ENCODE measurements at regions of chr5 and their contacts with region 1.

Region 1: GRCh38 chr5:150700594-150701293 is at the start of gene RBM22:
- DNase-seq: peak; percentile 89
- H3K4me3 Mint-ChIP-seq: no peak within 1 kb of the TSS
- H3K27ac Mint-ChIP-seq: no peak within 1 kb of the TSS
- H3K4me1 Mint-ChIP-seq: peaks cover 5% of the 10 kb centered on the region
- H3K27me3 Mint-ChIP-seq: no peaks in the 10 kb centered on the region
- total RNA-seq, gene RBM22: 77.5 and 81.9 TPM in 2 replicates

Region 2: GRCh38 chr5:150409638-150410523 is 290.9 kb before region 1 on chr5:
- intact Hi-C with region 1: loop called (anchors 2 kb)
- DNase-seq: peak; percentile 38
- H3K4me3 Mint-ChIP-seq: peak overlapping the region; percentile 91
- H3K27ac Mint-ChIP-seq: peak overlapping the region; percentile 98
- H3K4me1 Mint-ChIP-seq: peaks cover 45% of the 10 kb centered on the region
- H3K27me3 Mint-ChIP-seq: no peaks in the 10 kb centered on the region

Region 3: DNA sequence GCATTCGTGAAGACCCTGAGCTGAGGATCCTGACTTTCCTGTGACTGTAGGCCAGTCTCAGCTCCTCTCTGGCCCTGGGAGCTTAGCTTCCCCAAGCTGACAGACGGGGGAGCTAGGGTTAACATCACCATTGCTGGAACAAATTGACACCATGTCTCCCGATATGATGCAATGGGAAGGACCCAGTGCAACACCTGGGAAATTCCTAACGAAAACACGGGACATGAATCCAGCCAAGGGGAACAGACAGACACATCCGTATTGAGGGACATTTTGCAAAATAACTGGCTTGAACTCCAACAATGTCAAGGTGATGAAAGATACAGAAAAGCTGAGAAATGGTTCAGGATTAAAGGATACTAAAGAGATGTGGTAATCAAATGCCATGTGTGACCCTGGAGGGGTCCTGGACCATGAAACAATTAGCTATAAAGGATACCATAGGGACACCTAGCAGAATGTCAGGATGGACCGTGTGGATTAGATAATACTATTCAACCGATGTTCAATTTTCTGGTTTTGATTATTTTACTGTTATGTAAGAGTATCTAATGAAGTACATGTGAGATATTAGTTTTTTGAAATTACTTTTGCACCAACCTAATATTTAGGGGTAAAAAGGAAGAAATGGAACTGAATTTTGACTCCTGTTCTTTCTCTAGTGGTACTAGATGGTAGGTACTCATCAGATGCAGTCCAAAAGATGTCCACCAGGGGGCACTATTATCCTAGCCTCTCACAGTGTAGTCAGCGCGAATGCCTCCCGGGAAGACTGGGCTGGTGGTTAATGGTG is 140.1 kb before region 1 on chr5:
- intact Hi-C with region 1: loop called (anchors 2 kb)
- DNase-seq: peak; percentile 71
- H3K4me3 Mint-ChIP-seq: no peak overlapping the region
- H3K27ac Mint-ChIP-seq: no peak overlapping the region
- H3K4me1 Mint-ChIP-seq: no peaks in the 10 kb centered on the region
- H3K27me3 Mint-ChIP-seq: peaks cover 7% of the 10 kb centered on the region

Region 4: DNA sequence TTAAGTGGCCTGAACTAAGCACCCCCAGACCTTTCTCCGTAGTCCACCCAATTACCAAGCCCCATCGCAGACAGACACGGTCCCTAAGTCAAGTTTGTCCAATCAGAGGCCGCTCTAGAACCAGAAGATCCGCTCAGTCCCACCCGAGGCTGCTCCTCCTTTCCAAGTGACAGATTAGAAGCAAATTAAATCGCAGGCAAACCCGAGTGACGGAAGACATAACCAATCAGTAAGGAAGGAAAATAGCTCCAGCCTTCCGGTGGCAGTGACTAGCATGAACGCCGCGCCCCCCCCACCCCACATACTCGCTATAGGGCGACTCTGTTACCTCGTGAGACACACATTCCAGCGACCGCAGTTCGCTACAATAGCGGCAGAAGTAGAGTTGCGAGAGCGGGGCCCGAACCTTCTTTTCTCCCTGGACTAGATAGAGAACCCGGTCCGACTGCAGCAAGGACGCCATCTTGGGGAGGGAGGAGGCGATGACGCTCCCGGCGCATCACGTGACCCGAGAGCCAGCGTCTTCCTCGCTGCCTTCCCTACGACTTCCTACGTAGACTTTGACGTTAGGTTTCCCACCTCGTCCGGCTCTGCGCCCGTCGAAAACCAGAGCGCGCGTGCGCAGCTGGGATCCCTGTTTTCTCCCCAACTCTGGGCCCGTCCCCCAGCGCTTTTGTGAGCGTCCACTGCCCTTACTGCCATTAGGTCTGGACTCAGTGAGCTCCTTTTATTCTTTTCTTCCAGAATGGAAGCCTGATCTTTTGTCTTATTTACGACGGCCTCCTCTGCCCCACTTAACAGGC is 58.0 kb after region 1 on chr5 and contains the start of gene DCTN4:
- intact Hi-C with region 1: loop called (anchors 1 kb)
- DNase-seq: peak; percentile 90
- H3K4me3 Mint-ChIP-seq: no peak within 1 kb of the TSS
- H3K27ac Mint-ChIP-seq: no peak within 1 kb of the TSS
- H3K4me1 Mint-ChIP-seq: peaks cover 34% of the 10 kb centered on the region
- H3K27me3 Mint-ChIP-seq: peaks cover 2% of the 10 kb centered on the region
- total RNA-seq, gene DCTN4: 42.3 and 46.4 TPM in 2 replicates

Region 5: DNA sequence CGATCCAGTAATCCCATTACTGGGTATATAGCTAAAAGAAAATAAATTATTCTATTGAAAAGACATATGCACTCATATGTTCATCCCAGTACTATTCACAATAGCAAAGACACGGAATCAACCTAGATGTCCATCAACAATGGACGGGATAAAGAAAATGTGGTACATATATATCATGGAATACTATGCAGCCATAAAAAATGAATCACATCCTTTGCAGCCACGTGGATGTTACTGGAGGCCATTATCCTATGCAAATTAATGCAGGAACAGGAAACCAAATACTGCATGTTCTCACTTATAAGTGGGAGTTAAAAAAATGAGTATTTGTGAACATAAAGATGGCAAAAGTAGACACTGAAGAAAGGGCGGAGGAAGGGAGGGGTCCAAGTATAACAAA is 129.0 kb after region 1 on chr5:
- intact Hi-C with region 1: no loop called
- DNase-seq: no peak
- H3K4me3 Mint-ChIP-seq: no peak overlapping the region
- H3K27ac Mint-ChIP-seq: no peak overlapping the region
- H3K4me1 Mint-ChIP-seq: no peaks in the 10 kb centered on the region
- H3K27me3 Mint-ChIP-seq: peaks cover 6% of the 10 kb centered on the region

Region 6: DNA sequence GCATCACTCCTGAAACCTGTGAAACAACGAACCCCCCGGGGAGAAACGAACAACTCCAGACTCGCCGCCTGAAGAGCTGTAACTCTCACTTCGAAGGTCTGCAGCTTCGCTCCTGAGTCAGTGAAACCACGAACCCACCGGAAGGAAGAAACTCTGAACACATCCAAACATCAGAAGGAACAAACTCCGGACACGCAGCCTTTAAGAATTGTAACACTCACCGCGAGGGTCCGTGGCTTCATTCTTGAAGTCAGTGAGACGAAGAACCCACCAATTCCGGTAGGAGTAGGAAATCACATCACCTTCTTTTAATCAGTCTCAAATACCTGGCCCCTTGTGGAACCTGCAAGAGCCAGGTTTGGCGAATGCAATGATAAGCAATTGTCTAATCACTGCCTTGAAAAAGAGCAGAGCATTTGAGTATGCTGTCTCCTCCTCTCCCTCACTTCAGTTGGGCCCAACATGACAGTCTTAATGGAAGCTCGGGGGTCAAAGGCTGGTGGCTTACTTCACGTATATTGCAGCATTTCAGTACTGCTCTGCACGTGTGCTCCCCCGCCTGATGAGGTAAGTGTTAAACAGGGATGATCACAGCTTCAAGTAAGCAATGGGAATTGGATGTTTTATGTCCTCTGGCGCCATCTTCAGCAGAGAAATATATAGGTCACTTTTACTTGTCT is 146.1 kb after region 1 on chr5:
- intact Hi-C with region 1: loop called (anchors 1 kb)
- DNase-seq: peak; percentile 54
- H3K4me3 Mint-ChIP-seq: peak overlapping the region; percentile 79
- H3K27ac Mint-ChIP-seq: peak overlapping the region; percentile 70
- H3K4me1 Mint-ChIP-seq: peaks cover 19% of the 10 kb centered on the region
- H3K27me3 Mint-ChIP-seq: no peaks in the 10 kb centered on the region

Region 7: DNA sequence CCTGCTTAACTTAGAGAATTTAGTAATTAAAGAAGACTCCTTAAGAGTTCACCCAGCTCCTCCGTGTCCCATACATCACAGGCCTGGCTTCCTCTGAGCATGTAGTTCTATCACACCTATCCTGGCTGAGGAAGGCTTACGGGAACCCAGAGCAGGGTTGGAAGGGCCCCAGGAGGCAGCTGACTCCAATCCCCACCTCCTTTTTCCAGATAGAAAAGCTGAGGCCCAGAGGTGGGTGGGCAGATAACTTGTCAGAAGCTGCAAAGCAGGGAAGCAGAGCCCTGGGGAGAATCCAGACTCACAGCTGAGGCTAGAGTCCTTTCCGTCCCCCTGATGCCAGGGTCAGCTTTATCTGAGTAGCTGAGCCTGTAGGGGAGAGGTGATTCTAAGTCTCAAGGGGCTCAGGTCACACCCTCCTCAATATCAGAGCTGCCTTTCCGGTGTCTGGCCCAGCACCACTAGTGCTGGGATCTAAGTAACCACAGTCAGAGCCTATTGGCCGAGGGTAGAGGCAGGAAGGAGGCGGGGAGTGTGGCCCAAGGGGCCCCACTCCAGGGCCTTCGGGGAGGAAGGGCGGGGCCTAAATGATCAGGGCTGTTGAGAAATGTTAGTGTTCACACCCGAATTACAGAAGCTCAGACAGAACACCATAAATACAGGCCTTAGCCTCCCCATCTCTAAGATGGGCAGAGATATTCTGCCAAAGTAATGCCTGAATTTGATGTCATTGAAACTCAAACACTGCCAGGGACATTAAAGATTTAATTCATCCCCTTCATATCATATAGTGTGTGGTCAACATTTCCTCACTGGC is 513.3 kb after region 1 on chr5:
- intact Hi-C with region 1: loop called (anchors 5 kb)
- DNase-seq: peak; percentile 83
- H3K4me3 Mint-ChIP-seq: peak overlapping the region; percentile 87
- H3K27ac Mint-ChIP-seq: peak overlapping the region; percentile 93
- H3K4me1 Mint-ChIP-seq: peaks cover 81% of the 10 kb centered on the region
- H3K27me3 Mint-ChIP-seq: no peaks in the 10 kb centered on the region

Measured in activated T-helper 1 cell treated with anti-CD3 and anti-CD28 coated beads, Interleukin-12 subunit alpha, Interleukin-12 subunit beta, Interleukin-2, Interleukin-4 antibody, amounts not matched to agents 30 ng/mL and 10 ng/mL and 1 ng/mL, durations not matched to agents 14 hours and 24 hours and 36 hours (primary cell).